ENCODE measurements at regions of chr13 and their contacts with region 1.

Region 1: DNA sequence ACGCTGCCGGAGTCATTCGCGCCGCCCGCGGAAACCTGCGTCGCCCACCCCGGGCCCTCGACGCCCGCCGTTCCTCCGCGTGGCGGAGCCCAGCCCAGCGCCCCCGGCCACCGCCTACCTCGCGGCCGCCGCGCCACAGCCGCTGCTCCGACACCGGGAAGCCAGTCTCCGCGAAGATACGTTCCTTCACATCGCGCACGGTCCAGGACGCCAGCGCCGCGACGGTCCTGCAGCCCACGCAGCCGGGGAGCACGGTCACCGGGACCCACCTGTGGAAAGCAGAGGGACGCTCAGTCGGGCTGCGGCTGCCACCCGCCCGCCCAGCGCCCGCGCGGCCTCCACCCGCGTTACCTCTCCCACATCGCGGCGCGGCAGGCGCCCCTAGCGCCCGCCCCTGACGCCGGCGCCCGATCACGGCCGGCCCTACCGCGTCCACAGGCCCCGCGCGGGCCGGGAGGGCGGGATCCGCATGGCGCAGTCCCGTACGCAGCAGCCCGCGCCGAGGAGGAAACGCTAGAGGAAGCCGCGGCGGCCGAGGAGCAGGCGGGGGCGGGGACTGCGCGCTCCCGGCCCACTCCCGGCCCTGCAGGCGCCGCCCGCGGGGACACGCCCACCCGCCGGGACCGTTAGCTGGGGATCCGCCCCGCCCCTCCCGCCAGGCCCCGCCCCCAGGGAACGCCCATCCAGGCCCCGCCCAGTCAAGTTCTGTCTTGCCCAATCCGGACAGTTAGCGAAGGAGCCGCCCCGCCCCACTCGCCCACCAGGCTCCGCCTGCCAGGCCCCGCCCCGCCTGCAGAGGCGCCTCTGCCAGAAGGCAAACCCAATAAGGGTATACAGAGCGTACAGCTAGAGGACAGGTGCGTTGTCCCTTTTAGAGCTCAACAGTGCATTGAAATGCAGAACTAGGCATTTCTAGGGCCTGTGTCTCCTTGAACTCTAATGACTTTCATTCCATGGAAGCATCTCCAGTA is 58.2 kb downstream of the SACS start:
- DNase-seq: peak; percentile 90 to 98
- H3K4me3 ChIP-seq: peak overlapping the region; percentile 90 to 92
- H3K27ac ChIP-seq: peak overlapping the region; percentile 91 to 92
- H3K4me1 ChIP-seq: peaks cover 12 to 20% of the 10 kb centered on the region in 2 donors
- H3K27me3 ChIP-seq: no peaks in the 10 kb centered on the region
- CTCF ChIP-seq: peak in 2 of 3 experiments; percentile 14 to 43

Region 2: GRCh38 chr13:21670883-21671619 is 1704.2 kb before region 1 on chr13 and contains the start of gene FGF9:
- intact Hi-C with region 1: loop called (anchors 5 kb)
- DNase-seq: peak in 1 of 2 donors; percentile 84
- H3K4me3 ChIP-seq: peak within 1 kb of the TSS; percentile 67 to 83
- H3K27ac ChIP-seq: peak within 1 kb of the TSS in 1 of 2 donors; percentile 39
- H3K4me1 ChIP-seq: peaks cover 12 to 41% of the 10 kb centered on the region in 2 donors
- H3K27me3 ChIP-seq: peaks cover 5% of the 10 kb centered on the region
- CTCF ChIP-seq: no peak
- total RNA-seq, gene FGF9: not detected

Region 3: GRCh38 chr13:22929381-22930126 is 445.7 kb before region 1 on chr13:
- intact Hi-C with region 1: no loop called
- DNase-seq: no peak
- H3K4me3 ChIP-seq: no peak overlapping the region
- H3K27ac ChIP-seq: no peak overlapping the region
- H3K4me1 ChIP-seq: no peaks in the 10 kb centered on the region
- H3K27me3 ChIP-seq: no peaks in the 10 kb centered on the region
- CTCF ChIP-seq: no peak

Region 4: DNA sequence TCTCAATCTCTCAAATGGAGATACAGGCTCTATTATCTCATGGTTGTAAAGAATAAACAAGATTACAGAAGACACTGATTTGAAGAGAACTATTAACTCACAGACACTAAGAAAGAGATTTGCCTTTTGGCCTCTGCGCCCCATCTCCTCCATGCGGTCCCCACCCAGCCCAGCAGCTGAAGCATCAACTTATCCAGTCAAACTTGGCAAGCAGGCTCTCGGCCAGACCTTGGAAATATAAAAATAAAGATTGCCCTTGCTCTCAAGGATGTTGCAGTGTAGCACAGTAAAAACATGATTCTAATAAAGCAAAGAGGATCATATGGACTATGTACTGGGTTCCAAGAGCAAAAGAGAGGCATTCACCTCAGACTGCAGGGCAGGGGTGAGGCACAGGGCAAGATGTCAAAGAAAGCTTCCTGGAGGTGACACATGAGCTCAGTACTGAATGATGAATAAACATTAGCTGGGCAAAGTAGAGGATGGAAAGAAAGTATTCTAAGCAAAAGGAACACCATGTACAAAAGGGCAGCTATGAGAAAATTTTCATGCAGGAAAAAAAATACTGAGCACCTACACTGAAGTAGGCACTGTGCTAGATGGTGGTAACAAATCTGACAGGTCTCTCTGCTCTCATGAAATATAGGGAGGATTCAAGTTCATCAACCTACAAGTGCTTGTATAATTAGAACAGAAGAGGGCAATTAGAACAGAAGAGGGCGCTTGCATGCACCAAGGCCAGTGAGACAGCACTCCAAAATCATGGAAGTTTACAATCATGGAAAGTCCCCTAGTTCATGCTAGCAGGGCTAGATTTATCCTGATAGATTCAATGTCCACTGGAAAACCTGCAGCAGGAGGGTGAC is 26.8 kb before region 1 on chr13:
- intact Hi-C with region 1: no loop called
- DNase-seq: no peak
- H3K4me3 ChIP-seq: no peak overlapping the region
- H3K27ac ChIP-seq: peak overlapping the region; percentile 13 to 43
- H3K4me1 ChIP-seq: peaks cover 0 to 8% of the 10 kb centered on the region in 2 donors
- H3K27me3 ChIP-seq: no peaks in the 10 kb centered on the region
- CTCF ChIP-seq: no peak

Region 5: GRCh38 chr13:23427342-23427843 is 52.1 kb after region 1 on chr13:
- intact Hi-C with region 1: loop called (anchors 1 kb)
- DNase-seq: peak in 1 of 2 donors; percentile 88
- H3K4me3 ChIP-seq: peak overlapping the region; percentile 24 to 47
- H3K27ac ChIP-seq: peak overlapping the region; percentile 78 to 88
- H3K4me1 ChIP-seq: peaks cover 4 to 18% of the 10 kb centered on the region in 2 donors
- H3K27me3 ChIP-seq: no peaks in the 10 kb centered on the region
- CTCF ChIP-seq: no peak

Region 6: GRCh38 chr13:23579072-23579895 is 204.0 kb after region 1 on chr13:
- intact Hi-C with region 1: loop called (anchors 10 kb)
- DNase-seq: peak; percentile 32 to 92
- H3K4me3 ChIP-seq: peak overlapping the region; percentile 81 to 95
- H3K27ac ChIP-seq: peak overlapping the region in 1 of 2 donors; percentile 15
- H3K4me1 ChIP-seq: peaks cover 0 to 6% of the 10 kb centered on the region in 2 donors
- H3K27me3 ChIP-seq: peaks cover 7% of the 10 kb centered on the region
- CTCF ChIP-seq: no peak

Region 7: GRCh38 chr13:24033527-24034302 is 658.4 kb after region 1 on chr13:
- intact Hi-C with region 1: loop called (anchors 5 kb)
- DNase-seq: no peak
- H3K4me3 ChIP-seq: no peak overlapping the region
- H3K27ac ChIP-seq: peak overlapping the region; percentile 38 to 47
- H3K4me1 ChIP-seq: peaks cover 13 to 23% of the 10 kb centered on the region in 2 donors
- H3K27me3 ChIP-seq: no peaks in the 10 kb centered on the region
- CTCF ChIP-seq: no peak

Region 8: DNA sequence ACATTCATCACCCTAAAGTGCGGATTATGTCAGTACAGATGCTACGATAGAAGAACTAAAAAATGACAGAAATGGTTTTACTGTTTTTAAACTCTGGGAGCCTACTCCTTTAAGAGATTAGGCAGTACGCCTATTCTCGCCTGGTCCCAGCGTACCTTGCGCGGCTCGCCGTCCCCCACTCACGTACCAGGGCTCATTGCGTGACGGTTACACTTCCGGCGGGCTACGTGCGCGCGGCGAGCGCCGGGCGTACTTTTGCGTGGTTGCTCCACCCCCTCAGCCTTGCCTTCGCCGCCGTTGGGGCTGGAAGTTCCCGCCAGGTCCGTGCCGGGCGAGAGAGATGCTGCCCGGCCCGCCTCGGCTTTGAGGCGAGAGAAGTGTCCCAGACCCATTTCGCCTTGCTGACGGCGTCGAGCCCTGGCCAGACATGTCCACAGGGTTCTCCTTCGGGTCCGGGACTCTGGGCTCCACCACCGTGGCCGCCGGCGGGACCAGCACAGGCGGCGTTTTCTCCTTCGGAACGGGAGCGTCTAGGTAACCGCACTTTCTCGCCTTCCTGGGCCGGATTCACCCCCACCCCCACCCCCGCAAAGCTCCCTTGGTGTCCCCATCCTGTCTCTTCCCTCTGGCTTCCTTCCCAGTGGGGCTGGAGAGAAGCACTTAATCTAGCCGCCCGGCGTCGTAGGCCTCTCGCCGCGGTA is 1926.2 kb after region 1 on chr13 and contains the start of gene NUP58:
- intact Hi-C with region 1: loop called (anchors 10 kb)
- DNase-seq: peak; percentile 84 to 97
- H3K4me3 ChIP-seq: peak within 1 kb of the TSS; percentile 94
- H3K27ac ChIP-seq: peak within 1 kb of the TSS; percentile 91 to 96
- H3K4me1 ChIP-seq: peaks cover 0 to 11% of the 10 kb centered on the region in 2 donors
- H3K27me3 ChIP-seq: no peaks in the 10 kb centered on the region
- CTCF ChIP-seq: no peak
- total RNA-seq, gene NUP58: 9.7 TPM

Measured in ascending aorta (tissue), 2 donors.